IMR-90 (cell line): ENCODE measurements at regions of chr9 and their contacts with region 1.

Region 1: DNA sequence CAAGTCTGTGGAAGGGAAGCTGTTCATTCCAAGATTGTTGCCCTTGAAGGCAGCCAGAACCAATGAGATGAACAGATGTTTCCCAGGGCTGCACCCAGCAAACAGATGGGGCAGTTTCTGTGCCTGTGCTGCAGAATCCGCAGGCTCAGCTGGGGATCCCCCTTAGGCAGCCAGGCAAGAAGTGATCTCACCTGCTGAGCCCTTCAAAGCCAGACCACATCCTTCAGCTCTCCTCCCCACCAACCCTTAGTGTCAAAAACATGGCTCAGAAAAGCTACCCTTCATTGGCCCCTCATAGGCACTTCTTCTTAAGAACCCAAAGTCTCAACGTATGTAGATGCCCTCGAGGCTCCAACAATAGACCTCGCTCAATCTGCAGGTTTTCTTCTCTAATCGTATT is 626.7 kb downstream of the CCDC171 start:
- DNase-seq: no peak
- ATAC-seq: no peak
- H3K4me3 ChIP-seq: no peak overlapping the region
- H3K27ac ChIP-seq: no peak overlapping the region
- H3K4me1 ChIP-seq: peaks cover 2% of the 10 kb centered on the region; the same call in 1 of the 2 replicates
- H3K27me3 ChIP-seq: no peaks in the 10 kb centered on the region
- CTCF ChIP-seq: no peak
- POLR2A ChIP-seq: no peak
- RAD21 ChIP-seq: no peak

Region 2: DNA sequence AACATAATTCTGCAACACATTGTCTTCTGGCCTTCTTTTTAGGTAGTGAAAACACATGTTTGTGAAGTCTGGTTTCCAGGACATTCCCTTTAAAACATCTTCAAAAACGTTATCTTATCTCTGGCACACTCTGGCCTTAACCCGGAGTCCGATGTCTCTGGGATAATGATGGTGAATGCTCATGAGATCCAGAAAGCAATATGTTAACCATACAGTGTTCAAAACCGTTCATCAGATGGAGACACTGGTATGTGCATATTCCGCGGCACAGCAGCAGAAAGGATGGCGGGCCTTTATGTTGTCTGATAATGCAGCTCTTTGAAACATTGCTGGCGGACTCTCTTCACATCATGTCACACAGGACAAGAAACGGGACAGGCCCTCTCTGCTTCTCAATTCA is 21.5 kb before region 1 on chr9:
- CTCF ChIA-PET with region 1: no interaction called
- POLR2A ChIA-PET with region 1: no interaction called
- dilution Hi-C with region 1: no loop called
- in situ Hi-C with region 1: no loop called
- intact Hi-C with region 1: no loop called
- DNase-seq: no peak
- ATAC-seq: no peak
- H3K4me3 ChIP-seq: no peak overlapping the region
- H3K27ac ChIP-seq: no peak overlapping the region
- H3K4me1 ChIP-seq: no peaks in the 10 kb centered on the region
- H3K27me3 ChIP-seq: peaks cover 1% of the 10 kb centered on the region; the same call in 1 of the 2 replicates
- CTCF ChIP-seq: no peak
- POLR2A ChIP-seq: no peak
- RAD21 ChIP-seq: no peak

Region 3: GRCh38 chr9:17613763-17614162 is 1434.2 kb after region 1 on chr9:
- CTCF ChIA-PET with region 1: no interaction called
- POLR2A ChIA-PET with region 1: no interaction called
- dilution Hi-C with region 1: no loop called
- in situ Hi-C with region 1: no loop called
- intact Hi-C with region 1: loop called (anchors 10 kb)
- DNase-seq: peak; percentile 82
- ATAC-seq: peak; percentile 29; the same call in 1 of the 2 replicates
- H3K4me3 ChIP-seq: no peak overlapping the region
- H3K27ac ChIP-seq: no peak overlapping the region
- H3K4me1 ChIP-seq: peaks cover 4% of the 10 kb centered on the region
- H3K27me3 ChIP-seq: peaks cover 4% of the 10 kb centered on the region
- CTCF ChIP-seq: no peak
- POLR2A ChIP-seq: no peak
- RAD21 ChIP-seq: no peak